ENCODE measurements at regions of chr16 and their contacts with region 1.

Region 1: DNA sequence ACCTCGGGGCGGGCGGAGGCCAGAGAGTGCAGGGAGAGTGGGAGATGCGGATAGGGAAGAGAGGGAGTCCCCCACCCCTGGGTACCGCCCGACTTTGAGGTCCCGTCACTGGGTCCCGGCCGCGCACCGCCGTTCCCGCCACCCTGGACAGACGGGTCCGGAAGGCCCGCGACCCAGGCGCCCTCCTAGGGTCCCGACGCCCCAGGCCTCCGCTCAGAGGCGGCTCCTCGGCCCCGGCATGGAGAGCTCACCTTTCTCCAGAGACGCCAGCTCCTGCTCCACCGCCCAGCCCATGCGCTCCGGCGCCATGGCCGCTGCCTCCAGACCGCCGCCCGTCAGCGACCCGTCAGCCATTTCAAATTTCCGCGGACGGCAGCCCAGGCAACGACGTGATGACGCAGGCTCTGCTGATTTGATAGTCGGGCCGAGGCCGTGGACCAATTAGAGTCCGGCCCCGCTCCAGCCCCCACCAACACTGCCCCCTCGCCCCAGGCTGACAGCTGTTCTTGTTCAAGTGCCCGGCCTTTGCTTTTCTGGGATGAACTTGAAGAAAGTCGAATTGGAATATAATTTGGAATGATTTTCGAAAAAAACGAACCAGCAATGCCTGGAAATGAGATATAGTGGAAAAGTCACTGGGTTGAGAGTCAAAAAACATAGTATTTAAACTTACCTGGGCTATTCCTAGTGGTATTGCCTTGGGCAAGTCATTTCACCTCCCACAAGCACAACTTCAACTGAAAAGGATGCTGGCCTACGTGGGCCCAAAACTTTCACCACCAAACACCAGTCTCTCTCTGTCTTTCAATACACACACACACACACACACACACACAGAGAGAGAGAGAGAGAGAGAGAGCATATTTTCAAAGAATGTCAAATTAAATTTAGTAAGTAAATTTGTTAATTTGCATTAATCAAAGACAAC is at the start of gene SHCBP1:
- DNase-seq: peak; percentile 82
- H3K4me3 Mint-ChIP-seq: peak within 1 kb of the TSS; percentile 96
- H3K27ac Mint-ChIP-seq: peak within 1 kb of the TSS; percentile 96
- H3K4me1 Mint-ChIP-seq: peaks cover 19% of the 10 kb centered on the region
- H3K27me3 Mint-ChIP-seq: no peaks in the 10 kb centered on the region
- total RNA-seq, gene SHCBP1: 45.6 and 46.9 TPM in 2 replicates

Region 2: GRCh38 chr16:46658925-46659324 is 37.7 kb after region 1 on chr16:
- intact Hi-C with region 1: loop called (anchors 2 kb)
- DNase-seq: no peak
- H3K4me3 Mint-ChIP-seq: no peak overlapping the region
- H3K27ac Mint-ChIP-seq: peak overlapping the region; percentile 65
- H3K4me1 Mint-ChIP-seq: peaks cover 14% of the 10 kb centered on the region
- H3K27me3 Mint-ChIP-seq: no peaks in the 10 kb centered on the region

Measured in activated T-helper 2 cell treated with anti-CD3 and anti-CD28 coated beads, Interferon-gamma antibody, Interleukin-2, Interleukin-4, amounts not matched to agents 10 μg/mL and 5 μg/mL and 100 μg/mL, durations not matched to agents 14 hours and 24 hours and 36 hours (primary cell).